A549 (cell line): ENCODE measurements at regions of chr19 and their contacts with region 1.

Region 1: GRCh38 chr19:5803752-5804515 is 933 bp upstream of the NRTN start:
- DNase-seq: peak; percentile 83 to 87
- ATAC-seq: peak; percentile 85 to 96
- H3K4me3 ChIP-seq: peak overlapping the region; percentile 43; the same call in 2 of the 3 replicates
- H3K27ac ChIP-seq: peak overlapping the region; percentile 51 to 84; a peak in 5 of 6 replicates
- H3K4me1 ChIP-seq: peaks cover 17% of the 10 kb centered on the region; the same call in 2 of the 3 replicates
- CTCF ChIP-seq: peak; percentile 91
- EP300 ChIP-seq: no peak
- POLR2A ChIP-seq: no peak
- RAD21 ChIP-seq: peak; percentile 78 to 92

Region 2: GRCh38 chr19:5738426-5738825 is 65.5 kb before region 1 on chr19:
- CTCF ChIA-PET with region 1: no interaction called
- POLR2A ChIA-PET with region 1: no interaction called
- DNase-seq: no peak
- ATAC-seq: no peak
- H3K4me3 ChIP-seq: no peak overlapping the region
- H3K27ac ChIP-seq: no peak overlapping the region
- H3K4me1 ChIP-seq: no peaks in the 10 kb centered on the region
- CTCF ChIP-seq: no peak
- EP300 ChIP-seq: no peak
- POLR2A ChIP-seq: no peak
- RAD21 ChIP-seq: no peak

Region 3: DNA sequence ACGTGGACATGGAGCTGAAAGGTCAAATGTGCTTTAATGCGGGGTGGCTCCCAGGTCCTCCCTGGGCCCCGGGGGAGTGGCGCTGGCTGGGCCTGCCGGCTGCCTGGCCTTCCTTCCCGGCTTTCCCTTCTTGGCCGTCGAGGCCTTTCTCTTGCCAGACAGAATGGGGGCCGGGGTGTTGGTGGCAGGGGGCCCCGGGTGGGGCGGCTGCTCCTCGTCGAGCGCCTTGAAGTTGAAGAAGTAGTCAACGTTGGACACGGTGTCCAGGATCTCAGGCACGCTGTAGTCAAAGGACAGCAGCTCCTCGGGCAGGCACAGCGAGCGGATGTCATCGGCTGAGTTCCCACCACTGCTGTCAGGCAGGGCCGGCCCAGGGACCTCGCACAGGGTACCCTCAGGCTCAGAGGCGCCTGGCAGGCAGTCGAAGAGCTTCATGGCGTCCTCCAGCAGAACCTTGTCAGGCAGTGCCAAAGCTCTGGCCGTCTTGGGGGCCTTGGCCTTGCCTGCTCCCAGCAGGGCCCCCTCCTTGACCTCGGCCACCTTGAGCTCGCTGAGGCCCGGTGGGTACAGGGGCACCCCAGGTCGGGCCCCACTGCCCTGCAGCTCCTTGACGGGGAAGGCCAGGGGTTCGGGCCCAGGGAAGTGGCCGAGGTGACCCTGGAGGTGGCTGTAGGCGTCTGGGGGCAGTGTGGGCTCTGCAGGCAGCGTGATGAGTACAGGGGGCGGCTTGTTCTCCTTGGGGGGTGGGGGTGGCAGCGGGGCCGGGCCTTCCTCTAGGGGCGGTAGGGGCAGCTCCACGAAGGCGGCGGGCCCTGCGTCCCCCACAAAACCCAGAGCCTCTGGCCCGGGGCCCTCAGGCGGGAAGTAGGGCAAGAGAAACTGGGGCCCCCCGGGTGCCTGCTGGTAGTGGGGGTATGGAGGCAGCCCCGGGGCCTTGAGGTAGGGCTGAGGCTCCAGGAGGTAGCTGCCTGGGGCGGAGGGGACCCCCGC is 20.7 kb before region 1 on chr19:
- CTCF ChIA-PET with region 1: interaction called, 10 read pairs
- POLR2A ChIA-PET with region 1: no interaction called
- DNase-seq: no peak
- ATAC-seq: peak; percentile 11 to 15; a peak in 3 of 6 replicates
- H3K4me3 ChIP-seq: no peak overlapping the region
- H3K27ac ChIP-seq: no peak overlapping the region
- H3K4me1 ChIP-seq: no peaks in the 10 kb centered on the region
- CTCF ChIP-seq: no peak
- EP300 ChIP-seq: no peak
- POLR2A ChIP-seq: no peak
- RAD21 ChIP-seq: no peak

Region 4: GRCh38 chr19:5814852-5815246 is 10.9 kb after region 1 on chr19:
- CTCF ChIA-PET with region 1: interaction called, 31 read pairs
- POLR2A ChIA-PET with region 1: no interaction called
- DNase-seq: no peak
- ATAC-seq: peak; percentile 44 to 59; a peak in 5 of 6 replicates
- H3K4me3 ChIP-seq: no peak overlapping the region
- H3K27ac ChIP-seq: no peak overlapping the region
- H3K4me1 ChIP-seq: no peaks in the 10 kb centered on the region
- CTCF ChIP-seq: no peak
- EP300 ChIP-seq: no peak
- POLR2A ChIP-seq: no peak
- RAD21 ChIP-seq: no peak

Region 5: DNA sequence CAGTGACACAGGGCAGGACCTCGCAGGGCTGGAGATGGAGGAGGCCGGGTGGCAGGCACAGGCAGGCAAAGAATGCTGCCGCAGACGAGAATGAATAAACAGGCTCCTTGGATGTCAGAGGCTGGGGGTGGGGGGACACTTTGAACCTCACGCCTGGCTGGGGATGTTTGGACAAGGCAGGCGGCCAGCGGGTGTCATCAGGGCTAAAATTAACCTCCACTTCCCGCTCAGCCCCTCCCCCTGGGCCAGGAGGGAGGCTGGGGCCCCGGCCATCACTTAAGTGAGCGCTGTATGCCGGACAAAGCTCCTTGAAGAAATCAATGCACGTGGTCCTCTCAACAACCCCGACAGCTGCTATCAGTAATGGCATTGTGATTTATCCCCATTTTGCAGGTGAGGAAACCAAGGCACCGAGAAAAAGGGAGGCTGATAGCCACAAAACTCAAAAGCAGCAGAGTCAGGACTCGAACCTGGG is 76.7 kb after region 1 on chr19:
- CTCF ChIA-PET with region 1: interaction called, 13 read pairs
- POLR2A ChIA-PET with region 1: no interaction called
- DNase-seq: peak in 1 of 2 experiments; percentile 63
- ATAC-seq: peak; percentile 44 to 59; a peak in 4 of 6 replicates
- H3K4me3 ChIP-seq: no peak overlapping the region
- H3K27ac ChIP-seq: peak overlapping the region; percentile 67 to 72
- H3K4me1 ChIP-seq: peaks cover 38% of the 10 kb centered on the region
- CTCF ChIP-seq: no peak
- EP300 ChIP-seq: peak; percentile 16 to 37; a peak in 2 of 5 replicates
- POLR2A ChIP-seq: no peak
- RAD21 ChIP-seq: no peak

Region 6: GRCh38 chr19:5904352-5905113 is 100.6 kb after region 1 on chr19 and contains the start of gene VMAC:
- CTCF ChIA-PET with region 1: interaction called, 37 read pairs
- POLR2A ChIA-PET with region 1: interaction called, 5 read pairs
- DNase-seq: peak; percentile 89 to 100
- ATAC-seq: peak; percentile 83 to 87
- H3K4me3 ChIP-seq: peak within 1 kb of the TSS; percentile 99
- H3K27ac ChIP-seq: peak within 1 kb of the TSS; percentile 95 to 98
- H3K4me1 ChIP-seq: peaks cover 5% of the 10 kb centered on the region; the same call in 1 of the 3 replicates
- CTCF ChIP-seq: no peak
- EP300 ChIP-seq: no peak
- POLR2A ChIP-seq: peak; percentile 47; the same call in 1 of the 2 replicates
- RAD21 ChIP-seq: no peak
- polyA plus RNA-seq, gene VMAC: 1.1 and 1.5 TPM in 2 replicates

Region 7: GRCh38 chr19:6021878-6022569 is 218.1 kb after region 1 on chr19:
- CTCF ChIA-PET with region 1: interaction called, 10 read pairs
- POLR2A ChIA-PET with region 1: no interaction called
- DNase-seq: peak; percentile 55 to 66
- ATAC-seq: peak; percentile 83 to 96
- H3K4me3 ChIP-seq: no peak overlapping the region
- H3K27ac ChIP-seq: no peak overlapping the region
- H3K4me1 ChIP-seq: no peaks in the 10 kb centered on the region
- CTCF ChIP-seq: peak; percentile 55
- EP300 ChIP-seq: no peak
- POLR2A ChIP-seq: no peak
- RAD21 ChIP-seq: peak; percentile 50 to 65